ENCODE measurements at regions of chr9 and their contacts with region 1.

Region 1: DNA sequence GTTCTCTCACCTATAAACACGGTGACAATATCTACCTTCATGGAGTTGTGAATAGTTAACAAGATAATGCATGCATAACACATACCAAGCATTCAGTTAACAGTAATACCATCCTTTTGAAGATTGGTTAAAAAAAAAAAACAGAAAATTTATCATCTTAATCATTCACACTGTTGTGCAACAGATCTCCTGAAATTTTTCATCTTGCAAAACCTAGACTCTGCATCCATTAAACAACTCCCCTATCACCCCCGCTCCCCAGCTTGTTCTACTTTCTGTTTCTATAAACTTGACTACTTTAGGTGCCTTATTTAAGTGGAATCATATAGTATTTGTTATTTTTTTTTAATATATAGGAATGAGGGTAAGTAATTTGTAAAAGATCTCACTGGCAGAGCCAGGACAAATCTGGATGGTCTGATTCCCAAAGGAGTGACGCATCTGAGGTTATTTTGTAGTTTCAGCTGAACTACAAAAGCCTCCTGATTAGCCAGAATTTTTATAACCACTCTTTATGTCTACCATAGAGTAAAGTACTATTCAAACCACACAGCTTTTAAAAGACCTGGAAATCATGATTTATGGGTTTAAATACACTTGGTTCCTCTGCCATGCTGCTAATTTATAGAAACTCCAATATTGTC is 93.0 kb downstream of the FANCC start:
- DNase-seq: no peak
- H3K4me3 ChIP-seq: no peak overlapping the region
- H3K27ac ChIP-seq: peak overlapping the region in 1 of 2 experiments; percentile 58; a peak in 2 of 4 replicates
- H3K4me1 ChIP-seq: peaks cover 0 to 12% of the 10 kb centered on the region in 2 experiments; a peak in 2 of 4 replicates
- H3K27me3 ChIP-seq: no peaks in the 10 kb centered on the region
- CTCF ChIP-seq: no peak
- EP300 ChIP-seq: no peak
- RAD21 ChIP-seq: no peak

Region 2: DNA sequence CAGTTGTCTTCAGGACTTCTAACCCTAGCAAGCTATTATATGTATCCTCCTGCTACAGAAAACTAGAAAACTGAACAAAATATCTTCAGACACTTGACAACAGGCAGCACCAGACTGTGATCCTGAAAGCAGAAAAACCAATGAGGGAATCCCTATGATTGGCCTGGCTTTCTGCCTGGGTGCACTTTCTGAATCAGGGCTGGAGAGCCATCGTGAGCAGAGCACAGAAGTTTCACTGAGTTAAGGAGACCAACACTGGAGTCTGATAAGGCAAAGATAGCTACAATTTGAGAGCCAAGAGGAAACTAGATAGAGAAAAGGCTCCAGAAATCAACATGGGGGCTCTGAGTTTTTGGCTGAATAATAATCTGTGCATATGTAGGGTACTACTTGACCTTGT is 13.5 kb before region 1 on chr9:
- CTCF ChIA-PET with region 1: interaction called, 14 read pairs
- POLR2A ChIA-PET with region 1: no interaction called
- DNase-seq: no peak
- H3K4me3 ChIP-seq: no peak overlapping the region
- H3K27ac ChIP-seq: peak overlapping the region in 1 of 2 experiments; percentile 22; a peak in 1 of 4 replicates
- H3K4me1 ChIP-seq: peaks cover 2 to 19% of the 10 kb centered on the region in 2 experiments
- H3K27me3 ChIP-seq: no peaks in the 10 kb centered on the region
- CTCF ChIP-seq: no peak
- EP300 ChIP-seq: no peak
- RAD21 ChIP-seq: no peak

Measured in SK-N-SH (cell line).